CD4-positive, alpha-beta T cell (primary cell): ENCODE measurements at regions of chr10 and their contacts with region 1.

Region 1: DNA sequence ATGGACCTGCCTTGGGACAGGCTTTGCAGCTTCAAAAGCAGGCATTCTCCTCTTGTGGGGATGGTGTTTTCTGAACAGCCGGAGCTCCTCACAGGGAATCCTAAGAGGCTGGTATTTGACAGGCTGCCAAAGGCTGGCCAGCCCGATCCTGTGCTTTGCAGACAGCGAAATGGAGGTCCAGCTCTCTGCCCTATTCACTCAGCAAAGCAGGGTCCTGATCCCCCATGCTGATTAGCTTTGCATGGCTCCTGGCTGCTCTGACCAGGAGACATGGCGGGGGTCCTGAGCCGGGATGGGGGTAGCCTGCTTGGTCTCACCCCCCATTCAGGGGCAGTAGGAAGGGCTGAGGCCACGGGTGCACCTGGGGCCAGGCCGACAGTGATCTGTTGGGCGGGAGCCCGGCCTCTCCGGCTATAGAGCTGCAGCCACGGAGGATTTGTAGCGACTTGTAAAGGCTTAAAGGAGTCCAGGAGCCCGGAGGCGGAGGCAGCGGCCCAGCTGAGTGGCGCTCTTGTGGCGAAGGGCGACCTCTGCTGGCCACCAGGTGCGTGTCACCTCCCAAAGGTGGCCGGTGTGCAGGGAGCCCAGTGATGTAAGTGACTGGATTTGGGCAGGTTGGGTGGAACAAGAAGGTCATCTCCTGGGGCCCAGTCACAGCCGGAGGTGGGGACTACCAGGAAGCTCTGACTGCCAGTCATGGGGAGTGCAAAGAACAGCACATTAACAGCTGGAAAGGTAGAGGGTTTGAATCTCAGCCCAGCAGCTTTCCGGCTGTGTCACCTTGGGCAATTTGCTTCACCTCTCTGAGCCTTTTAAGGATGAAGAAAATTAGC is 126.5 kb downstream of the ZMIZ1 start:
- DNase-seq: peak; percentile 61 to 87 (median 72)
- ATAC-seq: peak; percentile 91
- H3K4me3 ChIP-seq: no peak overlapping the region
- H3K4me3 Mint-ChIP-seq: no peak overlapping the region
- H3K27ac ChIP-seq: no peak overlapping the region
- H3K27ac Mint-ChIP-seq: no peak overlapping the region
- H3K4me1 ChIP-seq: peaks cover 10% of the 10 kb centered on the region
- H3K4me1 Mint-ChIP-seq: no peaks in the 10 kb centered on the region
- H3K27me3 ChIP-seq: no peaks in the 10 kb centered on the region
- H3K27me3 Mint-ChIP-seq: no peaks in the 10 kb centered on the region
- CTCF ChIP-seq: peak; percentile 97

Region 2: DNA sequence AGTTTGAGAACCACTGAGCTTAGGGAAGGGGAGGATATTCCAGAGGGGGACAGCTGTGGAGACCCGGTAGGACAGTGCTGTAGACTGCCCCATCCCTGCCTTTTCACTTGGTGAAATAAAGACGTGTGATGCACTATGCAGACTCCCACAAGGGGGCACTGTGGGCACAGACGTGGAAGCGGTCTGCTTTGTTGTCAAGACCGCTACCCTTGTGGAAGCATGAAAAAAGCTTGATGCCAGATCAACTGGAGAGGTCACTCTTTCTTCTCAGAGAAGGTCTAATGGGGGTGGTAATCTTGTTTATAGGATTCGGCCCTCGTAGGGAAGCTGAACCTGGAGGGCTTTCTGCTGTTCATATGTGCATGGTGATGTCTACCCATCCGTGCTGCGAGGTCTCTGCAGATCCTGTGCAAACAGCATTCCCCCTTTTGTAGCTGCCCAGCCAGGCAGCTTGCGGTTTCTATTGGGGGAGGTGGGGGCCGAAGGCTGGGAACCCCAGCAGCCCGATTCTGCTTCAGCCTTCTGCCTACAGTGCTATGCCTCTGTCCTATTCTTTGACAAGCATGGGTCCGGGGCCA is 1147.9 kb before region 1 on chr10:
- CTCF ChIA-PET with region 1: interaction called, 37 read pairs
- POLR2A ChIA-PET with region 1: no interaction called
- intact Hi-C with region 1: loop called (anchors 1 kb)
- DNase-seq: peak; percentile 70 to 87 (median 78)
- ATAC-seq: peak; percentile 94
- H3K4me3 ChIP-seq: no peak overlapping the region
- H3K4me3 Mint-ChIP-seq: no peak overlapping the region
- H3K27ac ChIP-seq: no peak overlapping the region
- H3K27ac Mint-ChIP-seq: no peak overlapping the region
- H3K4me1 ChIP-seq: peaks cover 14% of the 10 kb centered on the region
- H3K4me1 Mint-ChIP-seq: peaks cover 19% of the 10 kb centered on the region
- H3K27me3 ChIP-seq: no peaks in the 10 kb centered on the region
- H3K27me3 Mint-ChIP-seq: no peaks in the 10 kb centered on the region
- CTCF ChIP-seq: peak; percentile 86

Region 3: DNA sequence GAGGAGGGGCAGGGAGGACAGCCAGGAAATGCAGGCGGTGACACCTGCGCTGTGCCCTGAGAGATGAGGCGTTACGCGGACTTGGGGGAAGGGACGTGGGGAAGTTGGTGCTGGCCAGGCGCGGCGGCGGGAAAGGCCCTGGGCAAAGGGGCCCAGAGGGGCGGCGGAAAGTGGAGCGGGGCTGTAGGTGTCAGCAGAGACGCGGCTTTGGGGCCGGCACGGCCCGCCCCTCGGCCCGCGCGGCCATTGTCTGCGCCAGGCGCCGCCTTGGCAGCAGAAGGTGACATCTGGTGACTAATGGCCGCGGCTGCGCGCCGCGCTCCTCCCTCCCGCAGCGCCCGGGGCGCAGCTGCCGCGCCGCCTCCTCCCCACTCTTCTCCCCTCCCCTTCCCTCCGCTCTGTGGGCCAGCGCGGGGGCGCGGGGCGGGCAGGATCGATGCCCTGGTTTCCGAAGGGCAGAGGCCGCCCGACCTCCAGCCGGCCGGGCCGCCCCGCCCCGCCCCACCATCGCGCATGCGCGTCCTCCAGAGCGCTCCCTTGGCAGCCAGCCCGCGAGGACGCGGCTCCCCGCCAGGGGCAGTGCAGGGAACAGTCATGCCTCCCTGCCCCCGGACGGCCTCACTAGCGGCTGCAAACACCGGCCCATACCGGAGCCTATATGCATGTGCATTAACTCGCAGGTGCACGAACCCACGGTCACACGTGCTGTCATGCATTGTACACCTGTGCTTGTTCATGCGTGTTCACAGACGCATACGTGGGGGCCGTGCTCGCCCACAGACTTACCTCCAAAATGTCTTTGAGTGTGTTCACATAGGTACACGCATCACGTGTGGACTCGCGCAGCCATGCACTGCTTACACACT is 892.1 kb before region 1 on chr10:
- CTCF ChIA-PET with region 1: no interaction called
- POLR2A ChIA-PET with region 1: interaction called, 3 read pairs
- intact Hi-C with region 1: loop called in 1 of 2 experiments (anchors 2 kb)
- DNase-seq: peak; percentile 89 to 98 (median 96)
- ATAC-seq: peak; percentile 86
- H3K4me3 ChIP-seq: peak overlapping the region; percentile 84
- H3K4me3 Mint-ChIP-seq: peak overlapping the region; percentile 93
- H3K27ac ChIP-seq: peak overlapping the region; percentile 83 to 91
- H3K27ac Mint-ChIP-seq: peak overlapping the region; percentile 90
- H3K4me1 ChIP-seq: peaks cover 26% of the 10 kb centered on the region
- H3K4me1 Mint-ChIP-seq: peaks cover 18% of the 10 kb centered on the region
- H3K27me3 ChIP-seq: no peaks in the 10 kb centered on the region
- H3K27me3 Mint-ChIP-seq: no peaks in the 10 kb centered on the region
- CTCF ChIP-seq: peak; percentile 82

Region 4: GRCh38 chr10:78599081-78599853 is 596.0 kb before region 1 on chr10:
- CTCF ChIA-PET with region 1: no interaction called
- POLR2A ChIA-PET with region 1: no interaction called
- intact Hi-C with region 1: loop called (anchors 5 to 10 kb)
- DNase-seq: peak in 1 of 14 experiments; percentile 4
- ATAC-seq: no peak
- H3K4me3 ChIP-seq: no peak overlapping the region
- H3K4me3 Mint-ChIP-seq: no peak overlapping the region
- H3K27ac ChIP-seq: no peak overlapping the region
- H3K27ac Mint-ChIP-seq: no peak overlapping the region
- H3K4me1 ChIP-seq: no peaks in the 10 kb centered on the region
- H3K4me1 Mint-ChIP-seq: no peaks in the 10 kb centered on the region
- H3K27me3 ChIP-seq: peaks cover 0 to 8% of the 10 kb centered on the region in 2 experiments
- H3K27me3 Mint-ChIP-seq: peaks cover 9% of the 10 kb centered on the region
- CTCF ChIP-seq: no peak

Region 5: DNA sequence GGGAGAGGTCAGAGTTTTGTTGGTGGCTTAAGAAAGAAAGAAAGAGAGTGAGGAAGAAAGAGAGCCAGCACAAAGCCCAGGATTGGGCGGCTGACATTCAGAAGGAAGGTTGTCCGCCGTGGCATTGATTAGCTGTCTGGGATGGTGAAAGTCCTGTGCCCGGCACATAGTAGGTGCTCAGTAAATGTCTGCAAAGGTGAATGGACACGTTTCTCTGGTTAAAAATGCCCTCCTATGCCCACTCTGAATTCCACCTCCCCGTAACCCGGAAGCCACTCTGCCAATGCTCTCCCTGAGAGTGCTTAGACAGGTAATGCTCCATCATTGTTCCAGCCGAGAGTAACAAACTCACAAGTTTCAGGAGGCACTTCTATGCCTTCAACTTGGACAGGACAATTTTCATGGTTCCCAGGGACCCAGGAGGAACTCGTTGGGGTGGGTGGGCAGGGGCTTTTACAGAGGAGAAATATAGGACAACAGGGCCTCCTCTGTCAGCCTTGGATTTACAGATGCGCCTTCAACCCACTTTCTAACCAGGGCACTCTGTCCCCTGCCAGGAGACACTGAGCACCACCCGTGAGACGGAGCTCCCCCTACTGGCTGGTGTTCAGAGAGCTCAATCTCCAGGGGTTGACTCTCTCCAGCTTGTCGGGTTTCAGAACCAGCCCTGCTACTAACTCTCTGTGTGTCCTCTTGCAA is 538.0 kb before region 1 on chr10:
- CTCF ChIA-PET with region 1: no interaction called
- POLR2A ChIA-PET with region 1: no interaction called
- intact Hi-C with region 1: loop called in 1 of 2 experiments (anchors 5 kb)
- DNase-seq: peak; percentile 37 to 70 (median 48)
- ATAC-seq: peak; percentile 46
- H3K4me3 ChIP-seq: no peak overlapping the region
- H3K4me3 Mint-ChIP-seq: no peak overlapping the region
- H3K27ac ChIP-seq: no peak overlapping the region
- H3K27ac Mint-ChIP-seq: no peak overlapping the region
- H3K4me1 ChIP-seq: no peaks in the 10 kb centered on the region
- H3K4me1 Mint-ChIP-seq: no peaks in the 10 kb centered on the region
- H3K27me3 ChIP-seq: peaks cover 0 to 4% of the 10 kb centered on the region in 2 experiments
- H3K27me3 Mint-ChIP-seq: peaks cover 16% of the 10 kb centered on the region
- CTCF ChIP-seq: peak; percentile 58

Region 6: GRCh38 chr10:78852466-78853240 is 342.7 kb before region 1 on chr10:
- CTCF ChIA-PET with region 1: interaction called, 3 read pairs
- POLR2A ChIA-PET with region 1: no interaction called
- intact Hi-C with region 1: loop called (anchors 2 kb)
- DNase-seq: peak in 5 of 14 experiments; percentile 6 to 47 (median 32)
- ATAC-seq: no peak
- H3K4me3 ChIP-seq: no peak overlapping the region
- H3K4me3 Mint-ChIP-seq: no peak overlapping the region
- H3K27ac ChIP-seq: no peak overlapping the region
- H3K27ac Mint-ChIP-seq: no peak overlapping the region
- H3K4me1 ChIP-seq: no peaks in the 10 kb centered on the region
- H3K4me1 Mint-ChIP-seq: no peaks in the 10 kb centered on the region
- H3K27me3 ChIP-seq: no peaks in the 10 kb centered on the region
- H3K27me3 Mint-ChIP-seq: no peaks in the 10 kb centered on the region
- CTCF ChIP-seq: no peak

Region 7: DNA sequence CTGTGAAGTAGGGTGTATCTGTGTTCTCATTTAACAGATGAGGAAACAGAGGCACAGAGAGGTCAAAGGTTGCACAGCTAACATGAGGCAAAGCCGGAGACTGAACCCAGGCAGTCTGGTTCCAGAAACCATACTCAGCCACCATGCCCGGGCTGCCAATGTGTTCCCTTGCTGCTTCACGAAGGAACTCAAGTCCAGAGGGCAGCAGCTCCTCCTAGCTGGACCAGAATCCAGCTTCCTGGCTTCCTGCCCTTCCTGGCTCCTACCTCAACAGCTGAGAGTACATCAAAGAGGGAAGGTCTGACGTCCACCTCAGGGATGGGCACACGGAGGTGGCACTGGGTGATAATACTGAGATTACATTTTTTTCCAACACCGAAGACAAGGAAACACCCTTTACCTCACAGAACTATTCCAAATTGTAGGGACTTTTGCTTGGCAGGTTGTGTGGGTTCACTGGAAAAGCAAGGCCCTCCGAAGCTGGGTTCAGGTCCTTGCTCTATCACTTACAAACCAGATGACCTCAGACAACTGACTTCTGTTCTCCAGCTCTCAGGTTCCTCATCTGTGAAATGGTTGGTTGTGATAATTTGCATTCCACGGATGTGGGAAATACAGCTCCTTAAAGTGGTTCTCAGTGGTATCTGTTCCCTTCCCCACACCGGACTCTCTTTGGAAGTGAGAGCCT is 280.7 kb before region 1 on chr10:
- CTCF ChIA-PET with region 1: no interaction called
- POLR2A ChIA-PET with region 1: no interaction called
- intact Hi-C with region 1: no loop called
- DNase-seq: no peak
- ATAC-seq: no peak
- H3K4me3 ChIP-seq: no peak overlapping the region
- H3K4me3 Mint-ChIP-seq: no peak overlapping the region
- H3K27ac ChIP-seq: no peak overlapping the region
- H3K27ac Mint-ChIP-seq: no peak overlapping the region
- H3K4me1 ChIP-seq: no peaks in the 10 kb centered on the region
- H3K4me1 Mint-ChIP-seq: no peaks in the 10 kb centered on the region
- H3K27me3 ChIP-seq: peaks cover 0 to 2% of the 10 kb centered on the region in 2 experiments
- H3K27me3 Mint-ChIP-seq: no peaks in the 10 kb centered on the region
- CTCF ChIP-seq: no peak

Region 8: GRCh38 chr10:79068562-79069324 is 126.6 kb before region 1 on chr10 and contains the start of gene ZMIZ1:
- CTCF ChIA-PET with region 1: interaction called, 4 read pairs
- POLR2A ChIA-PET with region 1: no interaction called
- intact Hi-C with region 1: loop called in 1 of 2 experiments (anchors 5 kb)
- DNase-seq: peak; percentile 63 to 90 (median 76)
- ATAC-seq: peak; percentile 62
- H3K4me3 ChIP-seq: peak within 1 kb of the TSS; percentile 97
- H3K4me3 Mint-ChIP-seq: peak within 1 kb of the TSS; percentile 97
- H3K27ac ChIP-seq: peak within 1 kb of the TSS; percentile 44 to 46
- H3K27ac Mint-ChIP-seq: peak within 1 kb of the TSS; percentile 86
- H3K4me1 ChIP-seq: peaks cover 64% of the 10 kb centered on the region
- H3K4me1 Mint-ChIP-seq: peaks cover 56% of the 10 kb centered on the region
- H3K27me3 ChIP-seq: no peaks in the 10 kb centered on the region
- H3K27me3 Mint-ChIP-seq: no peaks in the 10 kb centered on the region
- CTCF ChIP-seq: no peak
- total RNA-seq, gene ZMIZ1: 14.6 to 15.5 TPM

Region 9: GRCh38 chr10:79249186-79250121 is 54.1 kb after region 1 on chr10:
- CTCF ChIA-PET with region 1: no interaction called
- POLR2A ChIA-PET with region 1: no interaction called
- intact Hi-C with region 1: no loop called
- DNase-seq: peak in 2 of 14 experiments; percentile 37 to 46
- ATAC-seq: peak; percentile 14
- H3K4me3 ChIP-seq: no peak overlapping the region
- H3K4me3 Mint-ChIP-seq: no peak overlapping the region
- H3K27ac ChIP-seq: no peak overlapping the region
- H3K27ac Mint-ChIP-seq: no peak overlapping the region
- H3K4me1 ChIP-seq: peaks cover 63% of the 10 kb centered on the region
- H3K4me1 Mint-ChIP-seq: peaks cover 46% of the 10 kb centered on the region
- H3K27me3 ChIP-seq: no peaks in the 10 kb centered on the region
- H3K27me3 Mint-ChIP-seq: no peaks in the 10 kb centered on the region
- CTCF ChIP-seq: no peak